ENCODE measurements at regions of chr6 and their contacts with region 1.

Region 1: DNA sequence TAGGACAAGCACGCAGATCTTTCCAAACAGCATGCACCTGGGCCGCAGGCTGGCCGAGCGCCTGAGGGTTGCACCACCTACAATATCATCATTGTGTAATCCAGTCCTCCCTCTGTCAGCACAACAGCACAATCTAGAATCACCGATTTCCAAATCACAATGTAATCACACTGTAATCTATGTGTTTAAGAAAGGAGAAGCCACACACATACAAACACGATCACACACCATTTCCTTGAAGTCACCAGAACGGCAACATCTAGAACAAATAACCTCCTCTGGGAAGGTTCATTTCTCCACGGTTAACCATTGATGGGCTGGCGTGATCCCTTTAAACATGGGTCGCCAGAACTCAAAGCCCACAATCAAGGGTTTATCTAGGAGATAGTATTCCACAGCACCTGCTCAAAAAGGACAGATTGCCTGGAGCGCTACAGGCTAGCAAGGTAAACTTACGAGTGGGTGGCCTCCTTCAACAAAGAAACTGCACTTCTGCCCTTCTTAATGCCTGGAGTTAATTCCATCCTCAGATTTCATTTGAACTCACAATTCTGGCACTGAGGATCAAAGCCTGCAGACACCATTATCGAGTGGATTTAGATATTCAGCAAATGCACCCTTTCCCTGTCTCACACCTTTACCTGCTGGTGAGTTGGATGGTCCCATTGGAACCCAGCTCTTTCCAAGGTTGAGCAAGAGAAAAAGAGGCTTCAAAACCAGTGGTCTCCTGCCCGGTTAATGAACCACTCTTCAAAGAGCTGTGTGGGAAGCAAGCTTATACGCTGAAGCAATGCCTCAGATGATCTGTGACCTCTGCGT is 83.8 kb upstream of the FOXQ1 start:
- DNase-seq: peak; percentile 99
- ATAC-seq: peak; percentile 89
- H3K4me3 ChIP-seq: peak overlapping the region; percentile 54 to 68 (median 59)
- H3K27ac ChIP-seq: peak overlapping the region; percentile 96
- H3K4me1 ChIP-seq: peaks cover 97% of the 10 kb centered on the region
- H3K27me3 ChIP-seq: no peaks in the 10 kb centered on the region; a peak in 1 of 5 replicates
- CTCF ChIP-seq: 0 out of 2 replicates have a peak, but pooled peaks have one; percentile 3
- EP300 ChIP-seq: peak; percentile 85 to 98
- POLR2A ChIP-seq: peak; percentile 51 to 66; a peak in 3 of 4 replicates
- RAD21 ChIP-seq: peak; percentile 48

Region 2: DNA sequence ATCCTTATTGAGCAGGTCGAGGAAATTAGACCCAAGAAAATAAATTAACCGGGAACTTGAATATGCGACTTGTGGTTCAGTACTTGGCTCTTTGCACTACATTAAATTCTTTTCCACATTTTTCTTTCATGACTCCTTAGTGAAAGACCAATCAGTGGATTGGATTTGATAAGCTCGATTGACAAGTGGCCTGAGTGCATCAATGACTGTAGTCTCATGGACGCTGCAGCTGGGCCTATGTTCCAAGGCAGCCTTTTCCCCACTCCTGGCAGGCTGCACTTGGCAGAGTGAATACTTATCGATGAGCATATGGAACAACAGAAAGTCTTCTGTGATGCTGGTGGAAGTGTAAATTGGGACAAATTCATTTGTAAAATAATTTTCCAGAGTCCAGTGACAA is 324.4 kb before region 1 on chr6:
- CTCF ChIA-PET with region 1: no interaction called
- POLR2A ChIA-PET with region 1: interaction called, 15 read pairs
- in situ Hi-C with region 1: no loop called
- intact Hi-C with region 1: no loop called
- DNase-seq: no peak
- ATAC-seq: no peak
- H3K4me3 ChIP-seq: no peak overlapping the region
- H3K27ac ChIP-seq: no peak overlapping the region
- H3K4me1 ChIP-seq: peaks cover 30% of the 10 kb centered on the region
- H3K27me3 ChIP-seq: peaks cover 2 to 15% of the 10 kb centered on the region in 2 experiments; a peak in 2 of 5 replicates
- CTCF ChIP-seq: no peak
- EP300 ChIP-seq: no peak
- POLR2A ChIP-seq: no peak
- RAD21 ChIP-seq: no peak

Region 3: DNA sequence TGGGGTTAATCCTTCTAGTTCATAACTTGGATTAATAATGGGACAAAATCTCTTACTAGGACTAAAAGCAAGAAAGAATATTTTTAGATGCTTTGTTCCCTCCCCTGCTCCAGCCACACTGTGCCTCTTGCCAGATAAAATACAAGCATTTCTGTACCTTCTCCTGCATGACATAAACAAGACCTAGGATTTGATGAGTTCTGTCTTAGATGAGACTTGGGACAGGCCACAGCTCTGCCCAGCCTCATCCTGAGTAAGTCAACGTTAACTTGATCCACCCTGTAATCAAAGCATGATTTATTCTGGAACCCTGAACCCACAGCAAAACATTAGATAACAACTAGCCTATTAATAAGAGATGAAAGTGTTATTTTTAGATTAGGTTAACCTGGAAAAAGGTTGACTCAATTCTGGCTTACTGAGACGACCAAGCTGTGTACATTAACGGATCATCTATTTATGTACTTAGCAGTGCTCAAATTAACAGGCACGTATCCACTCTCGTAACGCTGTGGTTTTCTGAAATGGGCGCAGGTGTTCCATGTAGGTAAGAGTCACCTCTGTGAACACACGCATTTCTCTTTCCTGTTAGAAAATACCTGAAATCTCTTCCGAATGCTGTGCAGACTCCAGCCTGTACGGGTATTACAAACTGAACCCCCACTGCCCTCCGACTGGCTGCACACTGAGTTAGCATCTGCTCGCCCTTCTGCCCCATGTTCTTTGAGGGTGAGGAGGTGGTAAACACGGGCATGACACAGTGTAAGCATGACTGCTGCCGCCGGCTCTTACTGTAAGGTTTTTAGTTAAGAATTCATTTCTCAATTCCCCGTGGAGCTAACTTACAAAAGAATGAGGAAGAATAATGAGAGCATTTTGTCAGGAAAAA is 48.3 kb before region 1 on chr6:
- CTCF ChIA-PET with region 1: no interaction called
- POLR2A ChIA-PET with region 1: interaction called, 26 read pairs
- in situ Hi-C with region 1: no loop called
- intact Hi-C with region 1: no loop called
- DNase-seq: no peak
- ATAC-seq: no peak
- H3K4me3 ChIP-seq: no peak overlapping the region
- H3K27ac ChIP-seq: no peak overlapping the region
- H3K4me1 ChIP-seq: peaks cover 56% of the 10 kb centered on the region
- H3K27me3 ChIP-seq: no peaks in the 10 kb centered on the region
- CTCF ChIP-seq: no peak
- EP300 ChIP-seq: no peak
- POLR2A ChIP-seq: no peak
- RAD21 ChIP-seq: no peak

Region 4: DNA sequence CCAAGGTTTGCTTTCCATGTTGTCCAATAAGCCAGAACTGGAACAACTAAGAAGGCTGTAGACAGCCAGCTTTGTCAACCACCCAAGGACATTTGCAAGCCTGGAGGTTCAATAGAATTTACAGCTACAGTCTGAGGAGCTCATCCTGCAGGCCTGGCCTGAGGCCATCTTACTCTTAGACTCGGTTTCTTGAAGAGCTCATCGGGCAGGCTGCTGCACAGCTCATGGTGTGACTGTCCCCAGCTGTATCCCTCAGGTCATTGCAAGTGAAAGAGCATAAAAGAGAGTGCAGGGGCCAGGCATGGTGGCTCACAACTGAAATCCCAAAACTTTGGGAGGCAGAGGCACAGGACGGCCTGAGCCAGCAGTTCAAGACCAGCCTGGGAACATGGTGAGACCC is 13.1 kb before region 1 on chr6:
- CTCF ChIA-PET with region 1: no interaction called
- POLR2A ChIA-PET with region 1: interaction called, 26 read pairs
- in situ Hi-C with region 1: no loop called
- intact Hi-C with region 1: no loop called
- DNase-seq: no peak
- ATAC-seq: peak; percentile 48; the same call in 2 of the 3 replicates
- H3K4me3 ChIP-seq: no peak overlapping the region
- H3K27ac ChIP-seq: no peak overlapping the region
- H3K4me1 ChIP-seq: peaks cover 49% of the 10 kb centered on the region
- H3K27me3 ChIP-seq: no peaks in the 10 kb centered on the region
- CTCF ChIP-seq: peak; percentile 31; the same call in 1 of the 2 replicates
- EP300 ChIP-seq: no peak
- POLR2A ChIP-seq: no peak
- RAD21 ChIP-seq: no peak

Region 5: DNA sequence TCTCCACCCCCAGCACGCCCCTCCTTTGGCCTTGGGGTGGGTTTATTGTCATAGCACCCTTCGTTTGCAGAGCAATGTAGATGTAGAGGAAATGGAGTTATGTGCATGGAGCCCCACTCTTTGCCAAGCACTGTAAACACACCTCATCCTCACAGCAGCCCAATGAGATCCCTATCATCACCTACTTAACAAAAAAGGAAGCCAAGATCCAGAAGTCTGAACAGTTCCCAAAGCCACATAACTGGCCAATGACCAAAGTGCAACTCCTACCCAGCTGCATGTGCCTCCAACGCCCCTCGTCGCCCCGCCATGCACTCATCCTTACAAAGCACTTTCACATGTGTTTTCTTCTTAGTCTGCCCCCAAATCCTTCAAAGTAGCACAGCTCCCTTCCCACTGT is 61.9 kb after region 1 on chr6:
- CTCF ChIA-PET with region 1: no interaction called
- POLR2A ChIA-PET with region 1: interaction called, 10 read pairs
- in situ Hi-C with region 1: no loop called
- intact Hi-C with region 1: no loop called
- DNase-seq: no peak
- ATAC-seq: no peak
- H3K4me3 ChIP-seq: no peak overlapping the region
- H3K27ac ChIP-seq: no peak overlapping the region
- H3K4me1 ChIP-seq: peaks cover 24% of the 10 kb centered on the region
- H3K27me3 ChIP-seq: no peaks in the 10 kb centered on the region
- CTCF ChIP-seq: no peak
- EP300 ChIP-seq: no peak
- POLR2A ChIP-seq: no peak
- RAD21 ChIP-seq: no peak

Region 6: DNA sequence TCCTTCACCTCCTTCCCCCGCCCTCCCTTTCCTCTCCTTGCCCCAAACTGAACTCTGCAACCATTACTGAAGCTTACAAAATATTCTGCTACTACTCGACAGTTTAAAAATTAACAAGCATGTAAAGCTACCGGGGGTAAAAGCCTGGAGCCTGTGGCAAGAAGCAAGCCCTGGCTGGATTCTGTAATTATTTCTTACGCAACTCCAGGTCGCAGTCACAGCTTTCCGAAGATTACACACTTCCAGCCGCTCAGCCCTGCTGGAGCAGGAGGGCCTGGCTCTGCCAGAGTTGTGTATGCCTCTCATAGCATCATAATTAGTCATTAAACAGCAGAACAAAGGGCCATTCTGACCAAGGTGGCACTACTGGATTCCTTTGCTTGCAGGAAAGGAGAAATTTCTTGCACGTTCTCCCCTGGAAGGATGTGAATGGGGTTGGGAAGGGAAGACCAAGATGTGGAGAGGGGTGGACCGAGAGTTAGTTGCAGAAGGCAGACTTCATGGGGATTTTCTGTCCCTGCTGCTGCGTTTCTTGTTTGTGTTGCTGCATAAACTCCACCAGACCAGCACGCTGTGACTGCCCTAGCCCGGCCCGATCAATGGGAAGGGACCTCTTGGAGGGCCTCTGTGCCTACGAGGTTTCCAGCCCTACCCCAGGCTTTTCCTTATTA is 107.4 kb after region 1 on chr6:
- CTCF ChIA-PET with region 1: no interaction called
- POLR2A ChIA-PET with region 1: interaction called, 50 read pairs
- in situ Hi-C with region 1: no loop called
- intact Hi-C with region 1: loop called (anchors 1 kb)
- DNase-seq: peak; percentile 98
- ATAC-seq: peak; percentile 93
- H3K4me3 ChIP-seq: peak overlapping the region; percentile 20 to 65 (median 31)
- H3K27ac ChIP-seq: peak overlapping the region; percentile 73
- H3K4me1 ChIP-seq: peaks cover 48% of the 10 kb centered on the region
- H3K27me3 ChIP-seq: peaks cover 0 to 10% of the 10 kb centered on the region in 2 experiments; a peak in 1 of 5 replicates
- CTCF ChIP-seq: peak; percentile 41
- EP300 ChIP-seq: peak; percentile 89 to 93
- POLR2A ChIP-seq: peak in 1 of 2 experiments; percentile 52; a peak in 3 of 4 replicates
- RAD21 ChIP-seq: peak; percentile 52; the same call in 1 of the 2 replicates